ENCODE measurements at regions of chr6 and their contacts with region 1.

Region 1: GRCh38 chr6:56595490-56596122 is 47.1 kb downstream of the DST start:
- DNase-seq: peak; percentile 58
- ATAC-seq: peak; percentile 74
- H3K4me3 Mint-ChIP-seq: no peak overlapping the region
- H3K27ac Mint-ChIP-seq: no peak overlapping the region
- H3K4me1 Mint-ChIP-seq: peaks cover 23% of the 10 kb centered on the region
- H3K27me3 Mint-ChIP-seq: peaks cover 4% of the 10 kb centered on the region
- CTCF ChIP-seq: peak; percentile 70

Region 2: DNA sequence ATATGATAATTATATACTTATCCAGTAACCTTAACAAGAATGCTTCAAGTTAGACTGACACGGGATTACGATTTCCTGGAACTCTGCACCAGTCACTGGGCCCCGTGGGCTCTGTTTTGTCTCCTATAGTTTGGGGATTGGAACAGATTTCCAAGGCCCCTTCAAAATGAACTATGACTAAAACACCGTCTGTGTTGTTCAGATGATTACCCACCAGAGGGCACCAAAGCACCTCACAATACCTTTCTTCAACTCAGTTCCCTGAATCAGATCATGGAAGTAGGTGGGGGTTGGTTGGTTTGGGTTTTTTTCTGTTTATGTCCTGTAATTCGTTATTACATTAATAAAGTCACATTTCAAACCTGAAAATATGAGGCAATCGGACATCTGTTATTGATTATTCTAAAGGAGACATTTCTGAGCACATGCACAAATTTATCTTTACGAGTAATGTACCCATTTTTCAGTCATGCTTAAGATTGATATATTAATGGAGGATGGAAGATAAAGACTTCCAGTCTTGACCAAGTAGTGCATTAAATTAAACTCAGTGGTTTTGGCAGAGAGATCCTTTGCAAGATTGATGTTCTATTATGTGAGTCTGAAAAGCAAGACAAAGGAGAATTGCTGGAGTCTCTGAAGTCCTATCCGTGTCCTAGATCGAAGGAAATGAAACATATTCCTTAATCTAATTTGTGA is 236.3 kb before region 1 on chr6:
- CTCF ChIA-PET with region 1: interaction called, 15 read pairs
- POLR2A ChIA-PET with region 1: no interaction called
- intact Hi-C with region 1: loop called (anchors 2 kb)
- DNase-seq: peak; percentile 73
- ATAC-seq: peak; percentile 76
- H3K4me3 Mint-ChIP-seq: no peak overlapping the region
- H3K27ac Mint-ChIP-seq: no peak overlapping the region
- H3K4me1 Mint-ChIP-seq: no peaks in the 10 kb centered on the region
- H3K27me3 Mint-ChIP-seq: no peaks in the 10 kb centered on the region
- CTCF ChIP-seq: peak; percentile 71

Measured in activated CD8-positive, alpha-beta T cell treated with anti-CD3 and anti-CD28 coated beads for 36 hours (primary cell).